Activated CD4-positive, alpha-beta T cell treated with anti-CD3 and anti-CD28 coated beads for 36 hours (primary cell): ENCODE measurements at regions of chr6 and their contacts with region 1.

Region 1: GRCh38 chr6:1609648-1610496 is at the start of gene FOXC1:
- DNase-seq: peak; percentile 70
- ATAC-seq: peak; percentile 47
- H3K4me3 Mint-ChIP-seq: peak within 1 kb of the TSS; percentile 60
- H3K27ac Mint-ChIP-seq: no peak within 1 kb of the TSS
- H3K4me1 Mint-ChIP-seq: peaks cover 47% of the 10 kb centered on the region
- H3K27me3 Mint-ChIP-seq: peaks cover 58% of the 10 kb centered on the region
- total RNA-seq, gene FOXC1: 0.04 to 0.05 TPM

Region 2: DNA sequence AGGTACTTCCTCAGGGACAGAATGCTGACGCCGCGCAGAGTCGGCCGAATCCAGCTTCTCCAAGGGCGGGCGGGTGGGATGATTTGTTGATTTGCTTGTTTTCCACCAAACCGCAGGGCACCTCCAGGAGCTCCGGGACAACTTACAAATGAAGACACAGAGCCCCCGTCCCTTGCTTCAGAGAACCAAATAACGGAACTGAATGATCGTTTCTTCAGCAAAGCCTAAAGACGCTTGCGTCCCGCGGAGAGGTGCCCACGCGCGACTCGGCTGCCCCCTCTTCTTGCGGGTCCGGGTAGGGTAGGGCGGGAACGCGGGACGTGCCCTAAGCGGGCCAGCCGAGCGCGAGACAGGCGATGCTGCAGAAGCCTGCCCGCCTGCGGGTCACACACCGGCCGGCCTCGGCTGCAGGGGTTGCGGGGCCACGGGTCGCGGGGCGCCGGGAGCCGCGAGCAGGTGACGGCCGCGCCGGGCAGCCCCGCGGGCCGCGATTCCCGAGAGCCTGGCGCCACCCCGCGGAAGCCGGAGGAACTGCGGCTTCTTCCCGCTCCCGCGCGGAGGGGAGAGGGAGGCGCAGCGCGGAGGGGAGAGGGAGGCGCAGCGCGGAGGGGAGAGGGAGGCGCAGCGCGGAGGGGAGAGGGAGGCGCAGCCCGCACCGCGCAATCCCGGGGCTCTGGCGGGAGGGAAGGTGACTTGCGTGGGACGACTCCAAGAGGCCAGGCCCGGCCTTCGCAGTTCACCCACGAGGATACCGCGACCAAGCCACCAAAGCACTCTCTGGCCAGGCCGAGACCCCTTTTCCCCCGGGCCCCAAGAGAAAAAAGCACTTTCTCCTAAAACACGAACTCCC is 228.2 kb before region 1 on chr6:
- CTCF ChIA-PET with region 1: no interaction called
- POLR2A ChIA-PET with region 1: no interaction called
- intact Hi-C with region 1: loop called (anchors 5 kb)
- DNase-seq: peak; percentile 77
- ATAC-seq: peak; percentile 75
- H3K4me3 Mint-ChIP-seq: peak overlapping the region; percentile 10
- H3K27ac Mint-ChIP-seq: no peak overlapping the region
- H3K4me1 Mint-ChIP-seq: peaks cover 38% of the 10 kb centered on the region
- H3K27me3 Mint-ChIP-seq: peaks cover 68% of the 10 kb centered on the region

Region 3: DNA sequence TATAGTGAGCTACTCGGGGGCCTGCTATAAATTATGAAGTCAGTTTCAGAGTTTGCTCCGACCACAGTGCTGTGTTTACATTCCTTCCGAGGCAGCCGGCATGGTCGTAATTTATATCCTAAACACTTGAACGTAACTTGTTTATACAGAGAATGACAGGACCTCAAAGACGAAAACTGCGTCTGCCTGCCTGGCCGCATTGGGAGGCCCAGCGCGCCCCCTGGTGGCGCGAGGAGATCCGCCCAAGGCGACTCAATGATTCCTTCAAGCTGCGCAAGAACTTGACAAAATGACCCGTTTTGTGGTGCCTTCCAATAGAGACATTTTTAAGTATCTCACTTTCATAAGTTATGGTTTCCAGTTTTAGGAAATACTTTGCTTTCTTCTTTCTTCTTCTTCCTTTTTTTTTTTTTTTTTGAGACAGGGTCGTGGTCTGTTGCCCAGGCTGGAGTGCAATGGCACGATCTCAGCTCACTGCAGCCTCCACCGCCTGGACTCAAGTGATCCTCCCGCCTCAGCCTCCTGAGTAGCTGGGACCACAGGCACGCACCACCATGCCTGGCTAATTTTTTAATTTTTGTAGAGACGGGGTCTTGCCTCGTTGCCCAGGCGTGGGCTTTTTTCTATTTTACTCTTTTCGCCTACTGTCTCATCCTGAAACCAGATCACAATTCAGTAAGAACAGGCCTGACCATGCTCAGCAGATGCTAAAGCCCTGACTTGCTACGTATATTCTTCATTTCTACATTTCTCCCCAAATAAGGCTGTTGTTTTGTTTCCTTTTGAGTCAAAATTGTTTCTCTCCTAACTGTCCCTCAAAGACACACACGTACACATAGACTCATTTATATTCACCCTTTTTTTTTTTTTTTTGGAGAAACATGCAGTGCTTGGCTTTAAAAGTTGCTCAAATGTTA is 212.7 kb before region 1 on chr6:
- CTCF ChIA-PET with region 1: no interaction called
- POLR2A ChIA-PET with region 1: no interaction called
- intact Hi-C with region 1: loop called in 1 of 2 experiments (anchors 2 kb)
- DNase-seq: peak; percentile 85
- ATAC-seq: peak; percentile 75
- H3K4me3 Mint-ChIP-seq: no peak overlapping the region
- H3K27ac Mint-ChIP-seq: no peak overlapping the region
- H3K4me1 Mint-ChIP-seq: peaks cover 4% of the 10 kb centered on the region
- H3K27me3 Mint-ChIP-seq: peaks cover 51% of the 10 kb centered on the region

Region 4: GRCh38 chr6:1558388-1558787 is 51.5 kb before region 1 on chr6:
- CTCF ChIA-PET with region 1: no interaction called
- POLR2A ChIA-PET with region 1: no interaction called
- intact Hi-C with region 1: no loop called
- DNase-seq: no peak
- ATAC-seq: no peak
- H3K4me3 Mint-ChIP-seq: no peak overlapping the region
- H3K27ac Mint-ChIP-seq: no peak overlapping the region
- H3K4me1 Mint-ChIP-seq: peaks cover 18% of the 10 kb centered on the region
- H3K27me3 Mint-ChIP-seq: no peaks in the 10 kb centered on the region

Region 5: GRCh38 chr6:1624851-1625781 is 15.2 kb after region 1 on chr6:
- CTCF ChIA-PET with region 1: interaction called, 6 read pairs
- POLR2A ChIA-PET with region 1: no interaction called
- intact Hi-C with region 1: loop called (anchors 1 to 2 kb)
- DNase-seq: peak; percentile 25
- ATAC-seq: peak; percentile 11
- H3K4me3 Mint-ChIP-seq: peak overlapping the region; percentile 56
- H3K27ac Mint-ChIP-seq: no peak overlapping the region
- H3K4me1 Mint-ChIP-seq: peaks cover 11% of the 10 kb centered on the region
- H3K27me3 Mint-ChIP-seq: peaks cover 56% of the 10 kb centered on the region

Region 6: DNA sequence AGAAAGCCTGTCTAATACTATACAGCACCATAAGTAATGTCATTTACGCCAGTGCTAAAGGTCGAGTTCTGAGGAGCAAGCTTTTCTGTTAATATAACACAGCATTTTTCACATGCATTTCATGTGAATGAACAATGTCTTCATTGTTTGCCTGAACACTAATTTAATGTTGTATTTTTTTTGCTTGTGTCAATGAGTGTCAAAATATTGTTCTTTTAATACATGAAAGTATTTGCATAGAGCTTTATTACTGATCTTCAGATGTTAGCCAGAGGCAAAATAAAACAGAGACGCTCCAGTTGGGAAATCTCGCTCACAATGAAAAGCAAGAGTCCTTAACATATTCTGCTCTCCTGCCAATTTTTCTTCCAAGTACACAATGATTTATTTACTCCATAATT is 151.6 kb after region 1 on chr6:
- CTCF ChIA-PET with region 1: no interaction called
- POLR2A ChIA-PET with region 1: no interaction called
- intact Hi-C with region 1: no loop called
- DNase-seq: no peak
- ATAC-seq: no peak
- H3K4me3 Mint-ChIP-seq: no peak overlapping the region
- H3K27ac Mint-ChIP-seq: no peak overlapping the region
- H3K4me1 Mint-ChIP-seq: no peaks in the 10 kb centered on the region
- H3K27me3 Mint-ChIP-seq: no peaks in the 10 kb centered on the region

Region 7: DNA sequence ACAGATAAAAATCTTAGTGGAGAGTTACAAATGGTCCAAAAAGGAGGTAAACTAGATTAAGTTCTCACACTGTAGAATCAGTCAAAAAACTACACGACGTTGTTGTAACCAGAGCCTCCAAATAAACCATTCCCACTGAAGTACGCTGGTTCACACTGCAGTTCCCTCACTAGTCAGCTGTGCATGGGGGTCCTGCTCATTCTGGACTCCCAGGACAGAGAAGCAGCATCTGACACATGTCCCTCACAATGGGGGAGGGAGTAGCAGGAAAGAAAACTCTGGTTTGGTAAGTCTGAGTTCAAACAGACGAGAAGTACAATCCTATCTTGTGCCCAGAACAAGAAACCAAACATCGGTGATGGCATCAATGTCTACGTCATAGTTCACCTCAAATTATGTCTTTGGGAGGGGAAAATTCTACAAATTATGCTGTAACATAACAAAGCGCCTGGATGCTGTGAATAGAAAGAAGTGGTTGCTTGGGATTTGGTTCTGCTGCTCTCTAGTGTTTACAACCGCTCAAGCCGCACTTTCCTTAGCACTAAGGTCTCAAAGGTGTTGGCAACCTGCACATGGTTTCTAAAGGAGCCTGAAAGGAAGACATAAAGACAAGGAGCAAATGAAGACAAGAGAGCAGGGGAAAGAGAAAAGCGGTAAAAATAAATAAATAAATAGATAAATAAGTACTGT is 427.5 kb after region 1 on chr6:
- CTCF ChIA-PET with region 1: interaction called, 3 read pairs
- POLR2A ChIA-PET with region 1: no interaction called
- intact Hi-C with region 1: loop called in 1 of 2 experiments (anchors 5 kb)
- DNase-seq: no peak
- ATAC-seq: peak; percentile 47
- H3K4me3 Mint-ChIP-seq: no peak overlapping the region
- H3K27ac Mint-ChIP-seq: no peak overlapping the region
- H3K4me1 Mint-ChIP-seq: peaks cover 35% of the 10 kb centered on the region
- H3K27me3 Mint-ChIP-seq: no peaks in the 10 kb centered on the region

Region 8: DNA sequence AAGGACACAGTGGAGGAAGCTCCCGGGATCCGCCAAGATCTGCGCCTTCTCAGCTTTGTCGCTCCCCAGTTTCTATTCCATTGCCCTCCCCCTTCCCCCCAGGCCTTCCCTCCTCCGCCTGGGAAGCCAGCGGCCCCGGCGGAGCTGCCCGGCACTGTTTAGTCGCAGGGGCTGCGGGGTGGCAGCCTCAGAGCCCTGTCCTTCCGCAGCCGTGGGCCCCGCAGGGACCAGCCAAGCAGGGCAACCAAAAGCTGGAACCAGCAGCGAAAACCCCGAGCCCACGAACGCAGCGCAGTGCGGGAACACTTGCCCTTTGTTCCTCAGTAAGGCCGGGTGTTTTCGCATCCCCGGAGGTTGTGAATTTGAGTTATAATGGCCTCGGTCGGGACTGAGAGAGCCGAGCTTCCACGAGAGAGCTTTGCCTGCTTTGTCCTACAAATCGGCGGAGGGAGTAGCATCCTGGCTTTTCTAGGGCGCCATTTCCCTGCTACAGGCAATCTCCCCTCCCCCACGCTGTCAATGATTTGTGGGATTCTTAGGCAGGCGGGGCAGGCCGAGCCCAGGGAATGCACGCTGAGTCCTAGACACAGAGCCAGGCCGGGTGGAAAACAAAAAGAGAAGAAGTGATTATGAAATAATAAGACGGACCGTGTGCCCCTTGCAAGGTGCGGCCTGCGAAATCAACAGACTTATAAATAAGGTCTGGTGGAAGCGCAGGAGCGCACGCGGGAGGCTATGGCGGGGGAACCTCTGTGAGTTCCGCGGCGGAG is 1621.6 kb after region 1 on chr6:
- CTCF ChIA-PET with region 1: interaction called, 4 read pairs
- POLR2A ChIA-PET with region 1: no interaction called
- intact Hi-C with region 1: loop called in 1 of 2 experiments (anchors 5 kb)
- DNase-seq: peak; percentile 27
- ATAC-seq: no peak
- H3K4me3 Mint-ChIP-seq: peak overlapping the region; percentile 55
- H3K27ac Mint-ChIP-seq: no peak overlapping the region
- H3K4me1 Mint-ChIP-seq: peaks cover 43% of the 10 kb centered on the region
- H3K27me3 Mint-ChIP-seq: peaks cover 66% of the 10 kb centered on the region